ENCODE measurements at regions of chr12 and their contacts with region 1.

Region 1: DNA sequence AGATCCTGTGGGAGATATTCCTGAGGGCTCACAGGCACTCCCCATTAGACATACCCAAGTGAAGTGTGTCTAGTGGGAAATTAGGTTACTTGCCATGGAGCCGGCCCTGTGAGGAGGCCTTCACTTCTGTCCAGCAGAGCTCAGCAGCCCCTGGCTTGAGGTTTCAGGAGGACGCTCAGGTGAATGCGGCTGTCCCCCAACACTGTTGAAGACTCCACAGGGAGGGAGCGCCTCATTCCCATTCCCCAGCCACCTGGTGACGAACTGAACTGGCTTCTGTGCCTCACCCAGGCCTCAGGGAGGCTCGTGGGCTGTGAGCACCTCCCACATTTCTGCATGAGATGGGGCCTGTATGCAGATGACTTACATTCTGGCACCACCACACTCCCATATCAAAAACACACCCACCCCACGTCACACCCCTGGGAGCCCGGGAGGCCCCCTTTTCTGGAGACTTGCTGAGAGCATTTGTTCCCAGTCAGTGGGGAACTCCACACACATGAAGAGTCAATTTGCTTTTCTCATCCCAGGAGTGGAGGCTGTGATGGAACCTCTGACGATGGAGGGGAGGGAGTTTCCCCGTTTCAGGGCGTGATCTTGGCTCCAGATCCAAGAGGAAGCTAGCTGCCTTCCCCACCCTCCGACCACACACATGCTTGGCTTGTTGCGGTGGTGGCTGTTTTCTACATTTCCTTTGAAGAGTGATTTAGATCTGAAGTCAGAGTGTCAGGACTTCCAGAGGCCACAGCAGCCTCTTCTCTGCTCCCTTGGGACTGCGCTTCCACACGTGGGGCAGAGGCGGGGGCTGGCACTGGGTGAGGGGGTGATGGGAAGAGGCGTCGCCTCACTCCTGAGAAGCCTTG is 120.7 kb downstream of the ADGRD1 start:
- H3K4me3 Mint-ChIP-seq: no peak overlapping the region
- H3K27ac Mint-ChIP-seq: no peak overlapping the region
- H3K4me1 Mint-ChIP-seq: peaks cover 9% of the 10 kb centered on the region
- H3K27me3 Mint-ChIP-seq: peaks cover 13% of the 10 kb centered on the region

Region 2: DNA sequence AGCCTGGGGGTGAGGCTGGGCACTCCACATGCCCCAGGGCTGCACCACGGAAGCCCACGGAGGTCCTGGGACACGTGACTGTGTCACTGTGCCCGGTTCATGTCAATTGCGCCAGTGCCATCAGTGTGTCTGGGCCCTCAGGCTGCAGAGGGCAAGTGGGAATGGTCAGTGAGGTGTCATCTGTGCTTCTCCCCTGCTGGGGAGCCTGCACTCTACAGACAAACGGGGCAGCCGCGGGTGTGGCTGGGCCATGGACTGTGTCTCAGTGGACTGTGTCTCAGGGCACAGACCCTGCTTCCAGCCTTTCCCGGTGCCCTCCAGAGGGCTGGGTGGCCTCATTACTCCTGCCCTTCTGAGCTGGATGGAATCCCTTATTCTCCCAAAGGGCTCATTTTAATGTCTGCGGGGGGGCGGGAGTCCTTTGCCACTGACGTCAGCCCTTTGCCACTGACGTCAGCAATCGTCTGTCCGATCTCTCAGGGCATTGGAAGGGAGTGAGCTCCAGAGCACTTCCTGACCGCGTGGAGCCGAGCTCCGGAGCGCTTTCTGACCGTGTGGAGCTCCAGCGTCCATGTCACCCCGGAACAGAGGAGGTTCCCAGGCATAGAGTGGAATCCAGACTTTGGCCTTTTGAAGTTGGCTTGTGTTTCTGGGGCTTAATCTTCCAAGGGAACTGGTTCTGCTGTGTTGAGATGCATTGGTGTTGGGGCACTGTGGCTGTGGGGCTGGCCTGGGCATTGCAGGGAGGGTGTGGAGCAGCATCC is 48.3 kb before region 1 on chr12:
- intact Hi-C with region 1: no loop called
- H3K4me3 Mint-ChIP-seq: no peak overlapping the region
- H3K27ac Mint-ChIP-seq: no peak overlapping the region
- H3K4me1 Mint-ChIP-seq: no peaks in the 10 kb centered on the region
- H3K27me3 Mint-ChIP-seq: peaks cover 2% of the 10 kb centered on the region

Region 3: GRCh38 chr12:131061041-131061806 is 13.2 kb before region 1 on chr12:
- intact Hi-C with region 1: loop called (anchors 1 kb)
- H3K4me3 Mint-ChIP-seq: no peak overlapping the region
- H3K27ac Mint-ChIP-seq: no peak overlapping the region
- H3K4me1 Mint-ChIP-seq: peaks cover 14% of the 10 kb centered on the region
- H3K27me3 Mint-ChIP-seq: peaks cover 29% of the 10 kb centered on the region

Region 4: DNA sequence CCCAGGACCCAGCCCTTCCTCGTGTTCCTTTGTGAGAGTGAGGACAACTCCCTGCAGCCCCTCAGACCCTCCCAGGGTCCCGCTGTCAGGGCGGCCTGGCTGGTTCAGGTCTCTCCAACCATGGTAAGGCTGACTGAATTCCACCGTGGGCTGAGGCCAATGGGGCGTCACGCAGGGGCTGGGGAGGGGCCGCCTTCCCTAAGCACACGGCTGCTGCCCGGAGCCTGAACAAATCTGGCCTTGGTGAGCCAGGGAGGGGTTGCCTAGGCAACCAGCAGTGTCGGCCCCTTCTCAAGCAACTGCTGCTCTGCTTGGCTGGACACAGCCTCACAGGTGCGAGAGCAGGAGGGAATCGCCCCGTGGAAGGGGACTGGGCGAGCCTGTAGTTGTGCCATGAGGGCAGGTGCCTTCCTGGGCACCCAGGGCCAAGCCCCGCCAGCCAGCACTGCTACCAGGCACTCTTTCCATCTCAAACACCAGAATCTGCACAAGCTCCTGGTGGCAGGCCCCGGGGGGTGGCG is 1291.9 kb after region 1 on chr12:
- intact Hi-C with region 1: no loop called
- H3K4me3 Mint-ChIP-seq: no peak overlapping the region
- H3K27ac Mint-ChIP-seq: no peak overlapping the region
- H3K4me1 Mint-ChIP-seq: no peaks in the 10 kb centered on the region
- H3K27me3 Mint-ChIP-seq: peaks cover 22% of the 10 kb centered on the region

Measured in dendritic cell treated with granulocyte-macrophage colony-stimulating factor and Interleukin-4, amounts not matched to agents 40 ng/mL and 50 ng/mL, for 4 days (primary cell).